ENCODE measurements at regions of chr17 and their contacts with region 1.

Region 1: DNA sequence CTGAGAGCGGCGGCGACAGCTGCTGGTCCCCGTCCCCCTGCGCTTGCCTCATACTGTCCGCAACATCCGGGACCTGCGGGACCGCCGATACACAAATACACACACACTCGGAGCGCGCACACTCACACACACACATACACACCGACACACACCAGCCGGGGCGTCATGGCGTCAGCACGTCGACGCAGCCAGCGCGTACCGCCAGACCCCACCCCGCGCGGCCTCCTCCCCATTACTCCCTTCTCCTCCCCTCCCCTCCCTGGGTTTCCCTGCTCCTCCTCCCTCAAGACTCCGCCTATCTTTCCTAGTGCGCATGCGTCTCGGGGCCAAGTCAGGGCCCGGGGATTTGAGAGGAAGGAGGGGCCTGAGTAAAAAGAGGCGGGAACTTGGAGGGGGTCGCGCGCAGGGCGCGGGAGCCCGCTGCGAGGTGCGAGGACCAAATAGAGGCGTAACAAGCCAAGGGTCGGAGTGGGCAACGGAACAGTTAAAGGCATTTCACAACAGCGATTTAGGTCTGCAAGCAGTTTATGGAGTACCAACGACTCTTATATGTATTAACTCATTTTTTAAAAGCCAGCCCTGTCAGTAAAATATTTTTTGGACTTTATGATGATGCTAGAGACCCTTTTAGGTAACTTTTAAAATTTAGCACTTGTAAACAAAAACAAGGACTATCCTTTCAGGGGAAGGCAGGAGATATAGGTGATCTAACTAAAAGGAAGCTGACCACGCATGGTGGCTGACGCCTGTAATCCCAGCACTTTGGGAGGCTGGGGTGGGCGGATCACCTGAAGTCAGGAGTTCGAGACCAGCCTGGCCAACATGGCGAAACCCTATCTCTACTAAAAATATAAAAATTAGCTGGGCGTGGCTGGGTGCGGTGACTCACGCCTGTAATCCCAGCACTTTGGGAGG is at the start of gene SPOP:
- ATAC-seq: peak; percentile 87 to 93 (median 92)
- H3K4me3 ChIP-seq: peak within 1 kb of the TSS; percentile 49 to 62 (median 54)
- H3K27ac ChIP-seq: peak within 1 kb of the TSS; percentile 95 to 96
- H3K4me1 ChIP-seq: peaks cover 7 to 17% of the 10 kb centered on the region in 2 donors
- total RNA-seq, gene SPOP: 39.4 to 61.7 (median 45.4) TPM

Region 2: DNA sequence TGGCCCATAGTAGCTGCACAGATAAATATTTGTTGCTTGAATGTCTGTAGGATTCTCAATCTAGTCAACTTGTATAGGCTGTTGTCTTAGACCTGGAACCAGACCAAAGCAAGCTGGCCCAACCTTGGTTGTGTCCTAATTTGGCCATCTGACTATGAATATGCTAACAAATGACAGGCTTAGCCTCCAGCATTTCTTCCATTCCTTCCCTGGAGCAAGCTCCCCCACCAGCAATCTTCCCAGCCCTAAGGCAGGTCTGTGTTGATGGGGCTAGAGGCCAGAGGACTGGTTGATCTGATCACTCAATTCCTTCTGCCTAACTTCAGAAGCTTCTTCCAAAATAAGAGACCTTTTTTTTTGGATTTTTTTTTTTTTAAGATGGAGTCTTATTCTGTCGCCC is 438.2 kb before region 1 on chr17:
- in situ Hi-C with region 1: no loop called
- ATAC-seq: peak in 3 of 8 experiments; percentile 87 to 97 (median 96)
- H3K4me3 ChIP-seq: no peak overlapping the region
- H3K27ac ChIP-seq: no peak overlapping the region
- H3K4me1 ChIP-seq: no peaks in the 10 kb centered on the region

Region 3: DNA sequence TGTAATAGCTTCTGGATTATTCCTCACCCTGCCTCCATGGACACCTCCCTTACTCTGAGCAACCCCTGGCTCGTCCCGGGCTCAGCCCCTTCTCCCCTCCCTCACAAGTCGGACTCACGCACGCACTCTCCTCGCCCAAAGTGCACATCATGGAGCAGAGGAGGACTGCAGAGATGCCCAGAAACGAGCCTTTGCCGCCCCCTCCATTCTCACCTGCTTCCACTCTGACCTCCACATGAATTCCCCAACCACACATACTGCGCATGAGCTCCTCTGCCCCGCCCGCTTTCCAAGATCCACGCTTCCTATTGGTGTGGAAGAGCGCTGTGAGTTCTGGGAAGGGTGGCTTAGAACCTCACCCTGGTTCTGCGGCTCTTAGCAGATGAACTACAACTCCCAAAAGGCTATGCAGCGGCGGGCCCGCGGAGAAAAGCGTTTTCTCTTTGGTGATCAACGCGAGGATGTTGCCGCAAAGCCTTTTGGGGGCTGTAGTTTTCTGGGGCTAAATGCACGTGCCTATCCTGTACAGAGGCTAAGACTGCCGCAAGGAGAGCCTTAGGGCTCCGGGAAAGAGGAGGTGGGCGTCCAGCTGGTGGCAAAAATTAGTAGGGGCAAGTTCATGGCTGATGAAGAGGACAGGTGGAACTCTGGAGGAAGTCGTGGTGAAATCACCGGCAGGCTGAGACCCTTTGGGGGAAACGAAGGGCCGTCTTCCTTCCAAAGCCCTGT is 263.4 kb before region 1 on chr17 and contains the start of gene PHB1:
- in situ Hi-C with region 1: loop called in 4 of 9 experiments (anchors 25 kb)
- ATAC-seq: peak; percentile 97 to 99 (median 99)
- H3K4me3 ChIP-seq: peak within 1 kb of the TSS; percentile 62 to 87 (median 76)
- H3K27ac ChIP-seq: peak within 1 kb of the TSS in 1 of 2 donors; percentile 13
- H3K4me1 ChIP-seq: peaks cover 0 to 5% of the 10 kb centered on the region in 2 donors
- total RNA-seq, gene PHB1: 63.4 to 196 (median 97.5) TPM

Region 4: DNA sequence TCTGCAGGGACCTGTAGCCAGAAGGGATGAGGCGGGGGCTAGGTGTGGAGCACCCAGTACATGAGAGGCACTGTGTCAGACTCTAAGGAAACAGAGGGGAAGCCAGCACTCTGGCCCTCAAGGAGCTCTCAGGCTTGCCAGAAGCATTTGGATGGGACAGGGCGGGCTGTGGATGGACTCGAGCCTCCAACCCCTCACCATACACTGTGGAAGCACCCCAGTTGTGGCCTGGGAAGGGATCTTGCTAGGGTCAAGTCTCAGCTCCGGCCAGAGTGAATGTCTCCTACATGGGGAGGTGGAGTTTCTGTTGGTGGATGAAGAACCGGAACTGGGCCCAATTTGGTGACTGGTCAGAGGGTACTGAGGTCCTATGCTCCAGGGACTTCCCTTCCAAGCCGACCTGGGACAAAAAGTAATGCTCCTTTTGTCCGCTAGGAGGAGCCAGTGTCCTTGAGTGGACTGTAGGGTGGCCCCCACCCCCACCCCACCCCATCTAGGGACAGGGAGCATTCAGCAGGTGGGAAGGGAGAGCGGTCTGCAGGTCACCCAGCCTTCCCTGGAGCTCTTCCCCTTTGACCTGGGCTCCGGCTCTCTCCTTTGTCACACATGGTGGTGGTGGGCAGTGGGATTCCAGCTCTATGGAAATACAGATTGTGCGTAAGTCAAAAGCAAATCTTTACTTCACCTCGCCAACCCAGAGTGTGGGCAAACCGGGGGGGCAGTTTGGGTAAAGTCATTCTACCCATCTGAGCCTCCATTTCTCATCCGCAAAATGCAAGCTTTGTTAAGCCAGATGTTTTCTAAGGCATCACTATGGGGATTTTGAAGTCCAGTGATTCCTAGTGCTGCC is 243.1 kb before region 1 on chr17:
- in situ Hi-C with region 1: loop called in 2 of 9 experiments (anchors 25 kb)
- ATAC-seq: peak in 4 of 8 experiments; percentile 28 to 91 (median 71)
- H3K4me3 ChIP-seq: peak overlapping the region in 1 of 5 donors; percentile 8
- H3K27ac ChIP-seq: no peak overlapping the region
- H3K4me1 ChIP-seq: peaks cover 42 to 47% of the 10 kb centered on the region in 2 donors

Region 5: DNA sequence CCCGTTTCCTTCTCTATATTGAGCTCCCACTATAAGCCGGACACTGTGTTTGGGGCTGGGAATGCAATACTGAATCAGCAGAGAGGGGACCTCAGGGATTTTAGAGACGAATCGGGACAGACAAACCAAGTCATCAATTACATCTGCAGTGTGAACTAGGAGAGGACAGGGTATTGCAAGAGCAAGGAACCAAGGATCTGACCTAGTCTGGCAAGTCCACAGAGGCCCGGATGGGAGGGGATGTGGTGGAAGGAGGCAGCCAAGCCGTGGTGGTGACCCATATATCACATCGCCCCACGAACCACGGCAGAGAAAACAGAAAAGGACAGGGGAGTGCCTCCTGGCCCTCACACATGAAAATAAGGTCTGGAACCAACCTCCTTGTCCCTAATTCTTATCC is 130.6 kb before region 1 on chr17:
- in situ Hi-C with region 1: no loop called
- ATAC-seq: no peak
- H3K4me3 ChIP-seq: no peak overlapping the region
- H3K27ac ChIP-seq: no peak overlapping the region
- H3K4me1 ChIP-seq: peaks cover 3 to 5% of the 10 kb centered on the region in 2 donors

Measured in motor neuron (in vitro differentiated cells).